ENCODE measurements at regions of chr9 and their contacts with region 1.

Region 1: GRCh38 chr9:33884856-33885701 is 68.1 kb downstream of the UBE2R2 start:
- DNase-seq: no peak
- H3K4me3 Mint-ChIP-seq: no peak overlapping the region
- H3K27ac Mint-ChIP-seq: no peak overlapping the region
- H3K4me1 Mint-ChIP-seq: peaks cover 40% of the 10 kb centered on the region
- H3K27me3 Mint-ChIP-seq: no peaks in the 10 kb centered on the region

Region 2: GRCh38 chr9:33835625-33836260 is 49.3 kb before region 1 on chr9:
- CTCF ChIA-PET with region 1: no interaction called
- POLR2A ChIA-PET with region 1: no interaction called
- intact Hi-C with region 1: loop called (anchors 5 kb)
- DNase-seq: no peak
- H3K4me3 Mint-ChIP-seq: no peak overlapping the region
- H3K27ac Mint-ChIP-seq: peak overlapping the region; percentile 45
- H3K4me1 Mint-ChIP-seq: peaks cover 42% of the 10 kb centered on the region
- H3K27me3 Mint-ChIP-seq: no peaks in the 10 kb centered on the region